Dorsolateral prefrontal cortex (tissue), 120 donors: ENCODE measurements at regions of chr19 and their contacts with region 1.

Region 1: DNA sequence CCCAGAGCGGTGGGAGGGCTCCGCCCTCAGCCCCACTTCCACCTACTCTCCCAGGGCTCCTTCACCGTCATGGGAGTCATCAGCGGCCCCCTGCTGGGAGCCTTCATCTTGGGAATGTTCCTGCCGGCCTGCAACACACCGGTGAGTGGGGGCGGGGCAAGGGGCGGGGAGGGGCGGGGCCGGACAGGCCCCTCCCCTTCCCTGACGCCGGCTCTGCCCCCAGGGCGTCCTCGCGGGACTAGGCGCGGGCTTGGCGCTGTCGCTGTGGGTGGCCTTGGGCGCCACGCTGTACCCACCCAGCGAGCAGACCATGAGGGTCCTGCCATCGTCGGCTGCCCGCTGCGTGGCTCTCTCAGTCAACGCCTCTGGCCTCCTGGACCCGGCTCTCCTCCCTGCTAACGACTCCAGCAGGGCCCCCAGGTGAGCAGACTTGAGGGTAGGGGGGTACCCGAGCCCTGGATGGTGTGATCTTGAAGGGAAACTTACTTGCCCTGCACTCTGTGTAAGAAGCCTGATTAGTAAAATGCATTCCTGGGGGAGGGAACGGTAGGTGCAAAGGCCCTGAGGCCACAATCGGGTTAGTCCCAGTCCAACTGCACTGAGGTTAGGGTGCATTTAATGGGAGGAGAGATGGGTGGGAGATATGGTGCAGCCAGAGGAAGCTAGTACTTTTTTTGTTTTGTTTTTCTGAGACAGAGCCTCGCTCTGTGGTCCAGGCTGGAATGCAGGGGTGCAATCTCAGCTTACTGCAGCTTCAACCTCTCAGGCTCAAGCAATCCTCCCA is 12.1 kb downstream of the SLC5A5 start:
- DNase-seq: no peak
- H3K4me3 ChIP-seq: no peak overlapping the region
- H3K27ac ChIP-seq: no peak overlapping the region
- H3K27me3 ChIP-seq: no peaks in the 10 kb centered on the region
- CTCF ChIP-seq: no peak

Region 2: GRCh38 chr19:17915951-17916593 is 32.3 kb after region 1 on chr19:
- intact Hi-C with region 1: loop called in 1 of 2 experiments (anchors 5 kb)
- DNase-seq: no peak
- H3K4me3 ChIP-seq: no peak overlapping the region
- H3K27ac ChIP-seq: no peak overlapping the region
- H3K27me3 ChIP-seq: peaks cover 0 to 12% (median 0%) of the 10 kb centered on the region in 45 donors
- CTCF ChIP-seq: no peak